Activated naive CD4-positive, alpha-beta T cell treated with anti-CD3 and anti-CD28 coated beads, Interleukin-2, amount 10 ng/mL, durations not matched to agents 7 days and 5 days (primary cell): ENCODE measurements at regions of chr11 and their contacts with region 1.

Region 1: DNA sequence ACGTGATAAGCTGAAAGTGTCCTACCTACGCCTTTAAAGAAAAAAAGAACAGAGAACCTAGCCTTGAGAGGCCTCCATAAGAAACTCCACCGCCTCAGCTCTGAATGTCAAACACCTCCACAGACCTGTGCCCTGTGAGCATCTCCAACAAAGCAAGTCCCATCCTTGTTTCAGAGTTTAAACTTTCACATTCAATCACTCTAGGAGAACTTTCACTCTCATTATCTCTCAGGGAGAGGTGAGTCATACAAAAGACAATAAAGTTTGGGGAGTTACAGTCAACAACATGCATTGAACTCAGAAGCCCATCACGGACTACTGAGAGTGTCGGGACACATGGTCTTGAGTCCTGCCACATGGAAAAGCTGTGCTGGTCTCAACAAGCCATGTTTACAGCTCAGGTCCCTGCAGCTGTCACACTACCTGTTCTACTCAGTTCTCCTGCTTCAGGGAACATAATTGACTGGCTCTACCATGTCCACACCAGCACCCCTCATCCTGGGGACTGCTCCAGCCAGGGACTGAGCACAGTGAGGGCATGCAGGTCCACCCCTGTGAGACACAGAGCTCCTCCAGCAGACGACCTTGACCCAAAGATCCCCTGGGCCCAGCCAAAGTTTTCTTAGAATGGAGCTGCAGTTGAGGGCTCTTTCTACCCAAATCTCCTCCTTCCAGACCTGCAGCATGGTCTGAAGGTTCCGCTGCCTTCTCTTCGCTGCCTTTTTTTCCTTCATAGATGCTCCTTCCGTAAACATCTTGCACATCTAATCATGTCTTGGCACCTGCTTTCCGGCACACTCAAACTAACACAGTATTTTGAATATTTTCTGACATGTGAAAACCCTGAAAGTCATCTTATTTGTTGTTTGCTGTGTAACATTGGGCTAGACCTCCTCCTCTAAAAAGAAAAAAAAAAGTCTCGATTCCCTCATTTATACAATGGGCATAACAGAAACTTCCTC is 114.9 kb downstream of the ETS1 start:
- DNase-seq: peak; percentile 78
- H3K4me3 Mint-ChIP-seq: peak overlapping the region; percentile 47
- H3K27ac Mint-ChIP-seq: peak overlapping the region; percentile 92
- H3K4me1 Mint-ChIP-seq: peaks cover 98% of the 10 kb centered on the region
- H3K27me3 Mint-ChIP-seq: no peaks in the 10 kb centered on the region

Region 2: DNA sequence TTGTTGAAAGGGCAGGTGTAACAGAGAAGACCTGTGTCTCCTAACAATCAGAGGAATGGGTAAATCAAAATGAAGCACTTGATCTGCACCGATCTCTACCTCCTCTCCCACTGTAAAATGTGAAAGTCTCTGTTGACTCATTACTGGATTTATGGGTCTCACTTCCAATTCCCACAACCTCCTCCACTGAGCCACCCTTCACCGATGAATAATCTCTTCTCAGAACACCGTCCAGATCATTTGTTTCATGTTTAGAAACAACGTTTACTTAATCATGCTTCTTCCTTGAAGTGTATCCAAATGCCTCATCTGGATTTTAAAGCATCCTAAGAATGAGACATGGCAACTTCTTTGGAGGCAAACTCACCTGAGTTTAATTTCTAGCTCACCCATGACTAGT is 528.6 kb before region 1 on chr11:
- CTCF ChIA-PET with region 1: no interaction called
- DNase-seq: no peak
- H3K4me3 Mint-ChIP-seq: no peak overlapping the region
- H3K27ac Mint-ChIP-seq: no peak overlapping the region
- H3K4me1 Mint-ChIP-seq: no peaks in the 10 kb centered on the region
- H3K27me3 Mint-ChIP-seq: peaks cover 3% of the 10 kb centered on the region

Region 3: GRCh38 chr11:128482512-128483191 is 10.2 kb after region 1 on chr11:
- CTCF ChIA-PET with region 1: interaction called, 12 read pairs
- DNase-seq: peak; percentile 60
- H3K4me3 Mint-ChIP-seq: peak overlapping the region; percentile 77
- H3K27ac Mint-ChIP-seq: peak overlapping the region; percentile 92
- H3K4me1 Mint-ChIP-seq: peaks cover 98% of the 10 kb centered on the region
- H3K27me3 Mint-ChIP-seq: no peaks in the 10 kb centered on the region